CD4-positive, alpha-beta T cell (primary cell): ENCODE measurements at regions of chr1 and their contacts with region 1.

Region 1: GRCh38 chr1:27392096-27392777 is at the start of gene GPR3:
- DNase-seq: peak; percentile 88 to 97 (median 92)
- ATAC-seq: peak; percentile 89
- H3K4me3 ChIP-seq: peak within 1 kb of the TSS; percentile 45
- H3K4me3 Mint-ChIP-seq: peak within 1 kb of the TSS; percentile 77
- H3K27ac ChIP-seq: no peak within 1 kb of the TSS
- H3K27ac Mint-ChIP-seq: peak within 1 kb of the TSS; percentile 57
- H3K4me1 ChIP-seq: peaks cover 36% of the 10 kb centered on the region
- H3K4me1 Mint-ChIP-seq: peaks cover 26% of the 10 kb centered on the region
- H3K27me3 ChIP-seq: no peaks in the 10 kb centered on the region
- H3K27me3 Mint-ChIP-seq: peaks cover 3% of the 10 kb centered on the region
- CTCF ChIP-seq: peak; percentile 71
- total RNA-seq, gene GPR3: 0.14 to 0.19 TPM

Region 2: DNA sequence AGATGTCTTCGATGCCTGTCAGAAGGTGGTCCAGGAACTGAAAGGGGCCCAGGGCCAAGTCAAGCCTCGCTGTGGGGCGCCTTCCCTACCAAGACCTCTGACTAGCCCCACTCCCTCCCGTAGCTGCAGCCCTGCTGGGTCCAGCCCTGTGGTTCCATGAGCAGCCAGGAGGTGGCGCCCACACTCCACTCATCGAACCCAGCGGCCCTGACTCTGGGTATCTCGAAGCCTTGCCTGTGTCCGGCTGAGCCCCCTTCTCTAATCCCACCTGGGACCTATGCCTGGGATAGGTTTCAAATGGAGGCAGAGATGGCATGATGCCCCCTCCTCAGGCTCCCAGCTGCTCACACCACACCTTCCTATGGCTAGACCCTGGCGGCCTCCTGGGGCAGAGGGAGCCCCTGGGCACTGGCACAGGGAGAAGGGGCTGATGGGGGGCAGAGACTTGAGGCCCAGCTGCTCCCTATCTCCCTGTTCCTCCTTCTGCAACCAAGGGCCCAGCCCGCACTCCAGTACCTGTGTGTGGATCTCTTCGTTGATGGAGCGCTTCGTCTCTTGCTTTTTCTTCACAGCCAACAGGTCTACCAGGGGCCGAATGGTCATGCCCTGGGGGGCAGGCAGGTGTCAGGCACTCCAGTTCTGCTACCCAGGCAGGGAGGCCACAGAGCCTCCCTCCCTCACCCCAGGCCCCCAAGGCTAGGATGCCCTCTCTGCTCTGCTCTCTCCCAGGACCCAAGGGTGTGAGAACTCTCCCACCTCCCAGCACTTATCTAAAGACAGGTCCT is 289.3 kb before region 1 on chr1:
- CTCF ChIA-PET with region 1: no interaction called
- POLR2A ChIA-PET with region 1: no interaction called
- intact Hi-C with region 1: loop called in 1 of 2 experiments (anchors 5 kb)
- DNase-seq: peak; percentile 58 to 89 (median 78)
- ATAC-seq: peak; percentile 92
- H3K4me3 ChIP-seq: no peak overlapping the region
- H3K4me3 Mint-ChIP-seq: no peak overlapping the region
- H3K27ac ChIP-seq: no peak overlapping the region
- H3K27ac Mint-ChIP-seq: no peak overlapping the region
- H3K4me1 ChIP-seq: peaks cover 12% of the 10 kb centered on the region
- H3K4me1 Mint-ChIP-seq: no peaks in the 10 kb centered on the region
- H3K27me3 ChIP-seq: no peaks in the 10 kb centered on the region
- H3K27me3 Mint-ChIP-seq: no peaks in the 10 kb centered on the region
- CTCF ChIP-seq: peak; percentile 91

Region 3: DNA sequence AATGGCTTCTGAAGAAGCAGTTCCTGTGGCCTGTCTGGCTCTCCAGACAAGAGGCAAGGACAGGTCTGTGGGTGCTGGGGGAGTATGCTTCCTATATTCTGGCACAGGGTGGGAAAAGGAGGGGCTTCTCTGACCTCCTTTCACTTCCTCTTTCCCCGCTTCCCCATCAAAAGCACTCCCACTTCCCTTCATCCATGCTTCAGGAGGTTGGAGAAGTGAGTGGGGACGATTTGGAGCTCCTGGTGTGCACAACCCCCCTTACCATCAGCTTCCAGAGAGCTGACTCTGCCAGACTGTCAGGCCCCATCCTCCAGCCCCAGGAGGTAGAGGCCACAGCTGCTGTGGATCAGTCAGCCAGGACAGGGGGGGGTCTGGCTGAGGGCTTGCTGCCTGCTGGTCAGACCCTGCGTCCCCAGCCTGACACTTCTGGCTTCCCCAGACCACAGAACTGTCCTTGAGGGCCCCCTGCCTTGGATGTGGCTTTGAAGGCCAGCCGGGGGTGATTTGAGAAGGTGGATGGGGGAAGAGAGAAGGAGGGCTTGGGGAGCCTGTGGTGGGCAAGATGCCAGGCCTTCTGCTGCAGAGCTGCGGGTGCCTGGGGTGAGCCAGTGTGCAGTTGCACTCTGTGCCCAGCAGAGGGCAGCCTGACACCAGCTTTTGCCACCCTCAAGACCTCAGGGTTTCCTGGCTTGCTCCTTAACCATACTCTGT is 91.7 kb before region 1 on chr1:
- CTCF ChIA-PET with region 1: interaction called, 125 read pairs
- POLR2A ChIA-PET with region 1: interaction called, 12 read pairs
- intact Hi-C with region 1: loop called (anchors 1 kb)
- DNase-seq: peak; percentile 61 to 91 (median 74)
- ATAC-seq: peak; percentile 96
- H3K4me3 ChIP-seq: no peak overlapping the region
- H3K4me3 Mint-ChIP-seq: no peak overlapping the region
- H3K27ac ChIP-seq: no peak overlapping the region
- H3K27ac Mint-ChIP-seq: no peak overlapping the region
- H3K4me1 ChIP-seq: peaks cover 8% of the 10 kb centered on the region
- H3K4me1 Mint-ChIP-seq: peaks cover 5% of the 10 kb centered on the region
- H3K27me3 ChIP-seq: no peaks in the 10 kb centered on the region
- H3K27me3 Mint-ChIP-seq: no peaks in the 10 kb centered on the region
- CTCF ChIP-seq: peak; percentile 96

Region 4: DNA sequence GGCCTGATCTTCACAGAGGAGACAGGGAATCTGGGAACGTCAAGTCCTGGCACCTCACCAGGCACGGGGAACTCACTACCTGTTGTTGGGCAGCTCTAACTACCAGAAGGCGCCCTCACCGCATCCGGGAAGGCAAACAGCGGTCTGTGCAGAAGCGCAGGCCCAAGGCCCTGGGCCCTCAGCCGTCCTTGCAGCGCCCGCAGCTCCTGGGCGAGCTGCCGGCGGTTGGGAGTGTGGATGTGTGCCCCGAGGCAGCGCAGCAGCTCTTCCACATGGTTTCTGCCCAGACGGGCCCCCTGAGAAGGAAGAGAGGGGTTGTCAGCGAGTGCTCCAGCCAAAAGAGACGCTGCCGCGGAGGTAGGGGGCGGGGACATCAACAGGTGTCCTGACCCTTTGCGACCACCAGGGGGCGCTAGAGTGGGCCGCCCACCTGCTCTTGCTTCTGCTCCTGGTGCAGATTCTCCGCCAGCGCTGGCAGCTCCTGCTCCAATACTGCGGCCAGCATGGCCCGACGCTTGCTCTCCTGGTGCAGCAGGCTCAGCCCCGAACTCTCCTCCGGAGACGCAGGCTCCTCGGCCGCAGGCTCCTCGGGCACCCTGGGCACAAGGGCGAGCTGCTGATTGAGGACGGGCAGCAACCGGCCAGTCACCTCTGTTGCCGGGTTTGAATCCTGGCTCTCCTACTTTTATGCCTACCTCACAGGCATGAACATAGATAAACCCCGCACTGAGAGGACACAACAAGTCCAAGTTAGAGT is 34.8 kb before region 1 on chr1:
- CTCF ChIA-PET with region 1: interaction called, 18 read pairs
- POLR2A ChIA-PET with region 1: interaction called, 4 read pairs
- intact Hi-C with region 1: loop called (anchors 1 kb)
- DNase-seq: peak; percentile 70 to 92 (median 80)
- ATAC-seq: peak; percentile 87
- H3K4me3 ChIP-seq: peak overlapping the region; percentile 57
- H3K4me3 Mint-ChIP-seq: peak overlapping the region; percentile 83
- H3K27ac ChIP-seq: peak overlapping the region in 1 of 2 donors; percentile 31
- H3K27ac Mint-ChIP-seq: peak overlapping the region; percentile 75
- H3K4me1 ChIP-seq: peaks cover 61% of the 10 kb centered on the region
- H3K4me1 Mint-ChIP-seq: peaks cover 47% of the 10 kb centered on the region
- H3K27me3 ChIP-seq: no peaks in the 10 kb centered on the region
- H3K27me3 Mint-ChIP-seq: no peaks in the 10 kb centered on the region
- CTCF ChIP-seq: peak; percentile 98

Region 5: GRCh38 chr1:27416387-27417111 is 24.3 kb after region 1 on chr1:
- CTCF ChIA-PET with region 1: interaction called, 15 read pairs
- POLR2A ChIA-PET with region 1: no interaction called
- intact Hi-C with region 1: no loop called
- DNase-seq: peak in 10 of 14 experiments; percentile 28 to 81 (median 49)
- ATAC-seq: peak; percentile 73
- H3K4me3 ChIP-seq: no peak overlapping the region
- H3K4me3 Mint-ChIP-seq: no peak overlapping the region
- H3K27ac ChIP-seq: no peak overlapping the region
- H3K27ac Mint-ChIP-seq: peak overlapping the region; percentile 54
- H3K4me1 ChIP-seq: peaks cover 18% of the 10 kb centered on the region
- H3K4me1 Mint-ChIP-seq: peaks cover 46% of the 10 kb centered on the region
- H3K27me3 ChIP-seq: no peaks in the 10 kb centered on the region
- H3K27me3 Mint-ChIP-seq: no peaks in the 10 kb centered on the region
- CTCF ChIP-seq: peak; percentile 60

Region 6: GRCh38 chr1:27498767-27499541 is 106.7 kb after region 1 on chr1:
- CTCF ChIA-PET with region 1: no interaction called
- POLR2A ChIA-PET with region 1: no interaction called
- intact Hi-C with region 1: no loop called
- DNase-seq: no peak
- ATAC-seq: no peak
- H3K4me3 ChIP-seq: no peak overlapping the region
- H3K4me3 Mint-ChIP-seq: no peak overlapping the region
- H3K27ac ChIP-seq: no peak overlapping the region
- H3K27ac Mint-ChIP-seq: no peak overlapping the region
- H3K4me1 ChIP-seq: no peaks in the 10 kb centered on the region
- H3K4me1 Mint-ChIP-seq: no peaks in the 10 kb centered on the region
- H3K27me3 ChIP-seq: no peaks in the 10 kb centered on the region
- H3K27me3 Mint-ChIP-seq: no peaks in the 10 kb centered on the region
- CTCF ChIP-seq: no peak